ENCODE measurements at regions of chr7 and their contacts with region 1.

Region 1: GRCh38 chr7:100852048-100852872 is at the start of gene SLC12A9:
- DNase-seq: peak; percentile 94 to 97 (median 97)
- ATAC-seq: peak; percentile 99
- H3K4me3 ChIP-seq: peak within 1 kb of the TSS; percentile 55
- H3K27ac ChIP-seq: no peak within 1 kb of the TSS
- H3K4me1 ChIP-seq: no peaks in the 10 kb centered on the region
- H3K27me3 ChIP-seq: no peaks in the 10 kb centered on the region
- total RNA-seq, gene SLC12A9: 9.3 to 16.9 (median 12.6) TPM

Region 2: DNA sequence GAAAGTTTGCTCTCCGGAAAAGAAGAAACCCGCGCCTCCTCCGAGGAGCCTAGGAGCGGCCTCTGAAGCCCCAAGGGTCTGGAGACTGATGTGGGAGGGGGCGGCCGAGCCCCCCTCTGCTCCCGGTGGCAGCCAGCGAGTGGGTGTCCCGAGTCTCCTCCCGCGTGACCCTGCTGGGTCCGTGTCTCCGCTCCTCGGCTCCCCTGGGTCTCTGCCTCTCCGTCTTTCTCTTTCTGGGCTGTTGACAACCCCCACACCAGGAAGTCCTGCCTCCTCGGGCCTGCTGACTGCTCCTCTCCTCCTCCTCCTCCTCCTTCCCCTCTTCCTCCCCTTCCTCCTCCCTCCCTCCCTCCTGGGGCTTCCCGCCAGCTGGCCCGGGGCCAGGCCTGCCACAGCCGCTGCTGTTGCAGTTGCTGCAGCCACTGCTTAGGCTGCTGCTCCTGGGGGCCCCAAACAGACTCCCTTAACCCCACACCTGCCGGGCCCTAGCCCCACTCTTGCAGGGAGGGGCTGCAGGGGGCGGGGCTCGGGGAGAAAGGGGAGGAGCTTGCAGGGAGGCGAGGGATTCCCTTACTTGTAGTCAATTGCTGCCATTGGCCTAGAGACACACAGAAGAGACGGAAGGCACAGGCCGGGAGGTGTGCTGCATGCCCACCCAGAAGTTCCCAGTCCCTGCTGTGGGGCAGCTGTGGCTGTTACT is 373.1 kb before region 1 on chr7 and contains the start of gene TSC22D4:
- intact Hi-C with region 1: no loop called
- DNase-seq: peak; percentile 95 to 99 (median 97)
- ATAC-seq: peak; percentile 93 to 94
- H3K4me3 ChIP-seq: peak within 1 kb of the TSS; percentile 85
- H3K27ac ChIP-seq: peak within 1 kb of the TSS; percentile 69
- H3K4me1 ChIP-seq: peaks cover 12% of the 10 kb centered on the region
- H3K27me3 ChIP-seq: no peaks in the 10 kb centered on the region
- total RNA-seq, gene TSC22D4: 36.7 to 63.6 (median 48.6) TPM

Region 3: GRCh38 chr7:100691676-100692577 is 160.3 kb before region 1 on chr7:
- intact Hi-C with region 1: loop called in 1 of 4 experiments (anchors 10 kb)
- DNase-seq: peak; percentile 77 to 92 (median 92)
- ATAC-seq: peak; percentile 82 to 84
- H3K4me3 ChIP-seq: no peak overlapping the region
- H3K27ac ChIP-seq: peak overlapping the region; percentile 1
- H3K4me1 ChIP-seq: peaks cover 6% of the 10 kb centered on the region
- H3K27me3 ChIP-seq: no peaks in the 10 kb centered on the region

Region 4: GRCh38 chr7:100705753-100706671 is 146.2 kb before region 1 on chr7 and contains the start of gene POP7:
- intact Hi-C with region 1: loop called in 1 of 4 experiments (anchors 5 kb)
- DNase-seq: peak; percentile 99 to 100 (median 100)
- ATAC-seq: peak; percentile 97 to 98
- H3K4me3 ChIP-seq: peak within 1 kb of the TSS; percentile 69
- H3K27ac ChIP-seq: peak within 1 kb of the TSS; percentile 71
- H3K4me1 ChIP-seq: no peaks in the 10 kb centered on the region
- H3K27me3 ChIP-seq: no peaks in the 10 kb centered on the region
- total RNA-seq, gene POP7: 21.4 to 26.4 (median 24.2) TPM

Region 5: GRCh38 chr7:100803398-100804233 is 48.6 kb before region 1 on chr7:
- intact Hi-C with region 1: loop called (anchors 2 to 5 kb)
- DNase-seq: peak; percentile 84 to 93 (median 89)
- ATAC-seq: peak; percentile 69 to 86
- H3K4me3 ChIP-seq: no peak overlapping the region
- H3K27ac ChIP-seq: peak overlapping the region; percentile 43
- H3K4me1 ChIP-seq: peaks cover 4% of the 10 kb centered on the region
- H3K27me3 ChIP-seq: no peaks in the 10 kb centered on the region